H1 (cell line): ENCODE measurements at regions of chr11 and their contacts with region 1.

Region 1: DNA sequence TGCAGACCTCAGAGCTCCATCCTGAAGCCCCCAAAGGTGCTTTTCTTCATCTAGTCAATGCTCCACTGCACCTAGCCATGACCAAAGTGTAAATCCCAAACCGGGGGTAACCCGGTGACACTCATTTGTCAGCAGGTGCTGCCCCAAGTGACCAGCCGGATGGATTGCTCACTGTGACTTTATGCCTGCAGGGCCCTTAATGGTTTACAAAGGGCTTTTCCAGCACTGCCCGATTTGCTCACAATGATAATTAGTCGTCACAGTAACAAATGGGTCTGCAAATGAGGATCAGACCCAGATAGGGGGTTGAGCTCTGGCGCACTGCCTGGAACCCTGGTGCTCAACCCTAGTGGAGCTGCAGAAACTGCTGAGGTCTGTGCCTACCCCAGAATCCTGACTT is 45.7 kb upstream of the CD5 start:
- DNase-seq: no peak
- H3K4me3 ChIP-seq: no peak overlapping the region
- H3K27ac ChIP-seq: no peak overlapping the region
- H3K4me1 ChIP-seq: no peaks in the 10 kb centered on the region
- H3K27me3 ChIP-seq: no peaks in the 10 kb centered on the region
- CTCF ChIP-seq: no peak
- EP300 ChIP-seq: no peak
- POLR2A ChIP-seq: no peak
- RAD21 ChIP-seq: peak; percentile 10 to 40; a peak in 3 of 4 replicates

Region 2: GRCh38 chr11:61041755-61042518 is 14.6 kb before region 1 on chr11:
- CTCF ChIA-PET with region 1: interaction called, 10 read pairs
- POLR2A ChIA-PET with region 1: no interaction called
- DNase-seq: peak in 1 of 2 experiments; percentile 21
- H3K4me3 ChIP-seq: no peak overlapping the region
- H3K27ac ChIP-seq: no peak overlapping the region
- H3K4me1 ChIP-seq: peaks cover 2 to 10% (median 3%) of the 10 kb centered on the region in 4 experiments; a peak in 6 of 7 replicates
- H3K27me3 ChIP-seq: no peaks in the 10 kb centered on the region; a peak in 1 of 7 replicates
- CTCF ChIP-seq: no peak
- EP300 ChIP-seq: no peak
- POLR2A ChIP-seq: no peak
- RAD21 ChIP-seq: no peak

Region 3: DNA sequence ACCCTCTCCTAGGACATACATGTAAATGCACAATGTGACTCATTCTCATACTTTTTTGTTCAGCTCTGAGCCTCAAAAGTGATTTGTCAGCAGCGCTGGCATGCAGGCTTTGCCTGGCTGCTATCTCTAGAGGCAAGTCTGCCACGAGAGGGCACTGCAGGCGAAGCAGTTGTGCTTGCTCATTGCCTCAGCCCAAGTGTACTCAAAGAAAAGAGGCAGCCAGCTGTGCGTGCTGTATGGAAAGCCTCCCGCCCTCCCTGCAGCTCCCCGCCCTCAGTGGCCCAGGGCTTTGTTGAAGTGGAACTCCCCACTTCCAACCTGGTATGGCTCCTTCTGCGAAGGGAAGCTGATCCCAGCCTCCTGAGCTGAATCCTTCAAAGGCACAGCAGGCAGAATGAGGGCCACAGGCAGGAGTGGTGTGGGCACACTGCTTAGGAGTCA is 389.7 kb after region 1 on chr11:
- CTCF ChIA-PET with region 1: no interaction called
- POLR2A ChIA-PET with region 1: no interaction called
- DNase-seq: peak; percentile 69 to 88
- H3K4me3 ChIP-seq: no peak overlapping the region
- H3K27ac ChIP-seq: no peak overlapping the region
- H3K4me1 ChIP-seq: peaks cover 0 to 3% (median under 1%) of the 10 kb centered on the region in 4 experiments; a peak in 2 of 7 replicates
- H3K27me3 ChIP-seq: no peaks in the 10 kb centered on the region
- CTCF ChIP-seq: peak; percentile 78 to 97 (median 92)
- EP300 ChIP-seq: no peak
- POLR2A ChIP-seq: no peak
- RAD21 ChIP-seq: peak; percentile 83 to 85